ENCODE measurements at regions of chr19 and their contacts with region 1.

Region 1: DNA sequence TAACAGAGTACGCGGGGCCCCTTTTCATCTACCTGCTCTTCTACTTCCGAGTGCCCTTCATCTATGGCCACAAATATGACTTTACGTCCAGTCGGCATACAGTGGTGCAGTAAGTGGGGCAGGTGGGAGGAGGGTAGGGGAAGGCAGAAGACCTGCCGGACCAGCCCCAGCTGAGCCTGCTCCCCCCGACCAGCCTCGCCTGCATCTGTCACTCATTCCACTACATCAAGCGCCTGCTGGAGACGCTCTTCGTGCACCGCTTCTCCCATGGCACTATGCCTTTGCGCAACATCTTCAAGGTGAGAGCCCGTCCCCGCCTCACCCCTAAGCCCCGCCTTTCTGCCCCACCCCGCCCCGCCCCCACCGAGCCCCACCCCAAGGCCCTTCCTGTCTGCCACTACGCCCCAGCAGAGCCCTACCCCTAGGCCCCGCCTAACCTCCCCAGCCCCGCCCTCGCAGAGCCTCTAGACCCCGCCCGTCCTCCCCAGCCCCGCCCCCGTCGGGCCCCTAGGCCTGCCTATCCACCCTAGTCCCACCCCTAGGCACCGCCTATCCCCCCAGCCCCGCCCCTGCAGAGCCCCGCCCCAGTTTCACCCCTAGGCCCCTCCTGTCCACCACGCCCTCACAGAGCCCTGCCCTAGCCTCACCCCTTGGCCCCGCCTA is 7.7 kb downstream of the NDUFB7 start:
- DNase-seq: peak; percentile 82 to 95
- ATAC-seq: peak; percentile 57 to 77 (median 70)
- H3K4me3 ChIP-seq: peak overlapping the region; percentile 74
- H3K27ac ChIP-seq: peak overlapping the region; percentile 96
- H3K4me1 ChIP-seq: peaks cover 31% of the 10 kb centered on the region
- H3K27me3 ChIP-seq: no peaks in the 10 kb centered on the region
- CTCF ChIP-seq: no peak

Region 2: GRCh38 chr19:14419106-14419813 is 144.9 kb before region 1 on chr19 and contains the start of gene DDX39A:
- intact Hi-C with region 1: no loop called
- DNase-seq: peak; percentile 98
- ATAC-seq: peak; percentile 98 to 99 (median 99)
- H3K4me3 ChIP-seq: peak within 1 kb of the TSS; percentile 99
- H3K27ac ChIP-seq: peak within 1 kb of the TSS; percentile 95
- H3K4me1 ChIP-seq: peaks cover 20% of the 10 kb centered on the region
- H3K27me3 ChIP-seq: no peaks in the 10 kb centered on the region
- CTCF ChIP-seq: no peak
- total RNA-seq, gene DDX39A: 14.8 to 32.4 (median 26.6) TPM

Region 3: DNA sequence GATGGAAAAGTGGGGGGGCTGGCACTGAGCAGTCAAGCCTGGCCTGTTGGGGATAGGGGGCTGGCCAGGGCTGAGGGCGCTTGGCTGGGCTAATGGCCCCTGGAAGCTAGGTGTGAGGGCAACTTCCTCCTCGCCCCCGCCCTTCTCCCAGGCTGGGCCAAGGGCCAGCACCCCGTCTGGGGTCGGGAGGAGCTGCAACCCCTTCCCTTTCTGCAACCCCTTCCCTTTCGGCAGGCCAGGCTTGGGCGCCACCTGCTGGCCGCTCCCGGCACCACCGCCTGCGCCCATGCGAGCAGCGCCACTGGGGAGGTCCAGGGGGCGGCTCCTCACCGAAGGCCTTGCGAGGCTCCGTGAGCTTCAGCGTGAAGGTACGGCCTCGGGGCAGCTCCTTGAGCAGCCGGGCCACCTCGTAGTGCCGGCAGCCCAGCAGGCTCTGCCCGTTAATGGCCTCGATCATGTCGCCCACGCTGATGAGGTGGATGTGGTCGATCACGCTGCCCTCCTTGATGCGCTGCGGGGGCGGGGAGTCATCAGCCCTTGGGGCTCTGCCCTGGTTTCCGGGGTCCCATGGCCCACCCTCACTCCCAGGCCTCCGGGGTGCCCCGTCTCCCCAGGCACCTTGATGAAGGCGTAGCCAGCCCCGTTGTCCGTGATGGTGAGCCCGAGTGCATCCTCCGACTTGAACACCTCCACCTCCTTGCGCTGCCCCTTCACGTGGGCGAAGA is 84.0 kb before region 1 on chr19:
- intact Hi-C with region 1: no loop called
- DNase-seq: peak in 1 of 2 donors; percentile 35
- ATAC-seq: peak; percentile 22 to 59 (median 43)
- H3K4me3 ChIP-seq: no peak overlapping the region
- H3K27ac ChIP-seq: no peak overlapping the region
- H3K4me1 ChIP-seq: no peaks in the 10 kb centered on the region
- H3K27me3 ChIP-seq: peaks cover 0 to 15% (median 10%) of the 10 kb centered on the region in 3 donors
- CTCF ChIP-seq: peak; percentile 56

Region 4: GRCh38 chr19:14517840-14518505 is 46.1 kb before region 1 on chr19 and contains the start of gene DNAJB1:
- intact Hi-C with region 1: loop called in 1 of 2 experiments (anchors 5 kb)
- DNase-seq: peak; percentile 85 to 92
- ATAC-seq: peak; percentile 76 to 84 (median 78)
- H3K4me3 ChIP-seq: peak within 1 kb of the TSS; percentile 82
- H3K27ac ChIP-seq: peak within 1 kb of the TSS; percentile 98
- H3K4me1 ChIP-seq: peaks cover 42% of the 10 kb centered on the region
- H3K27me3 ChIP-seq: no peaks in the 10 kb centered on the region
- CTCF ChIP-seq: no peak
- total RNA-seq, gene DNAJB1: 32.6 to 105 (median 42.6) TPM

Region 5: GRCh38 chr19:14603990-14604387 is 39.9 kb after region 1 on chr19:
- intact Hi-C with region 1: no loop called
- DNase-seq: no peak
- ATAC-seq: no peak
- H3K4me3 ChIP-seq: no peak overlapping the region
- H3K27ac ChIP-seq: no peak overlapping the region
- H3K4me1 ChIP-seq: no peaks in the 10 kb centered on the region
- H3K27me3 ChIP-seq: no peaks in the 10 kb centered on the region
- CTCF ChIP-seq: no peak